Activated CD4-positive, alpha-beta memory T cell treated with anti-CD3 and anti-CD28 coated beads, Interleukin-2, amount 10 ng/mL, durations not matched to agents 7 days and 5 days (primary cell): ENCODE measurements at regions of chr19 and their contacts with region 1.

Region 1: GRCh38 chr19:45792470-45793177 is at the start of gene DMWD:
- DNase-seq: peak; percentile 100
- H3K4me3 Mint-ChIP-seq: peak within 1 kb of the TSS; percentile 96
- H3K27ac Mint-ChIP-seq: peak within 1 kb of the TSS; percentile 78
- H3K4me1 Mint-ChIP-seq: peaks cover 37% of the 10 kb centered on the region
- H3K27me3 Mint-ChIP-seq: peaks cover 53% of the 10 kb centered on the region
- total RNA-seq, gene DMWD: 63.1 to 65.4 TPM

Region 2: DNA sequence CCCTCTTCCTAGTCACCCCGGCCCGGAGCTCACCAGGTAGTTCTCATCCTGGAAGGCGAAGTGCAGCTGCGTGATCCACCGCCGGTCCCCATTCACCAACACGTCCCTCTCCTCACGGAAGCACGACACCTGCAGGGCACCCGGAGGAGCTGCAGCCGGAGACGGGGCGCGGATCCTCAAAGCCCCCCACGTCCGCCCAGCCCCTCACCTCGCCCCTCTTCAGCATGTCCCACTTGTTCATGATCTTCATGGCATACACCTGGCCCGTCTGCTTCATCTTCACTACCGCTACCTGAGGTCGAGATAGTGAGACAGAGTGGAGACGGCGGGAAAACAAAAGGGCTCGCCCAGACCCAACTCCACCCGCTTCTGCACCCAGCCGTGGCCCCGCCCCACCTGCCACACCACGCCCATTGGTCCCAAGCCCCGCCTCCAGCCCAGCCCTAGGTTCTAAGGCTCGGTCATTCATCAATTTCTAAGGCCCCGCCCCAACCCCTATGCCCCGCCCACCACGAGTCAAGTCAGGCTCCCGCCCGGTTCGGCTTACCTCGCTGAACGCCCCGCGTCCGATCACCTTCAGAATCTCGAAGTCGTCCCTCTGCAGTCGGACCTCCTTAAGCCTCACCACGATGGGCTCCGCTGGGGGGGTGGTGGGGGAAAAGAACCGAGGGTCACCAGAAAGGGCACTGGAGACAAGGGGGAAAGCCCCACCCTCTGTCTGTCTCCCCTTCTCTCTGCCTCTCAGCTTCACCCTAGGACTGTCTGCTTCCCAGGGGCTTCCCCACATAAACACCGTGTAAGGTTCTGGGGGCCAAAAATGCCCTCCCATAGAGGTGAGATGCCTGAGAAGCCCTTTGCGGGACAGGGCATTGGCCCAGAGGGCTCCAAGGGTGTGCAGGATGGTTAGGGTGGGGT is 13.1 kb before region 1 on chr19:
- CTCF ChIA-PET with region 1: interaction called, 212 read pairs
- POLR2A ChIA-PET with region 1: interaction called, 3 read pairs
- DNase-seq: peak; percentile 95
- H3K4me3 Mint-ChIP-seq: peak overlapping the region; percentile 67
- H3K27ac Mint-ChIP-seq: peak overlapping the region; percentile 33
- H3K4me1 Mint-ChIP-seq: peaks cover 20% of the 10 kb centered on the region
- H3K27me3 Mint-ChIP-seq: peaks cover 8% of the 10 kb centered on the region

Region 3: DNA sequence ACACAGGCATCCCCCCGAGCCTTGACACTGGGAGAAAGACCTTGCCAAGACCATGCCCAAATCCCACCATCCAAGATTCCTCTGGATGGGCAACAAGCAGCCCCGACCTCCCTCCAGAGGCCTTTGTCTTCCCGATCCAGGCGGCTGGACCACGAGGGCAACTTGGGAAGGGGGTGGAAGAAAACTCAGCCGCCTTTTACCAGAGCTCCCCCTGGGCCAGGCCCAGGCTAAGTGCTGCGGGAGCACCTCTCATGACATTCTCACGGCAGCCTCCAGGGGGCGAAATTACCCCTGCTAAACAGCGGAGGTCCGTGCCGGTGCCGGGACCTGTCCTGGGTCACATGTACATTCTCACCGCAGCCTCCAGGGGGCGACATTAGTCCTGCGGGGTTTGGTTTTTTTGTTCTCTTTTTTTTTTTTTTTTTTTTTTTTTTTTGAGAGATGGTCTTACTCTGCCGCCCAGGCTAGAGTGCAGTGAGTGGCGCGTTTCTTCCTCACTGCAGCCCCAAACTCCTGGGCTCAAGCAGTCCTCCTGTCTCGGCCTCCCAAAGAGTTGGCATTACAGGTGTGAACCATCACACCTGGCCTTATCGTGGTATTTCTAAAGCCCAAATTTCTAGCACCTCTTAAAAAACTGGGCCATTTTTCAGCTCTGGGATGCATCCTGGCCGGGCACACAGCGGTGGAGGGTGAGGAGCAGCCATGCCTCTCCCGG is 24.5 kb after region 1 on chr19:
- CTCF ChIA-PET with region 1: interaction called, 14 read pairs
- POLR2A ChIA-PET with region 1: no interaction called
- DNase-seq: peak; percentile 96
- H3K4me3 Mint-ChIP-seq: no peak overlapping the region
- H3K27ac Mint-ChIP-seq: no peak overlapping the region
- H3K4me1 Mint-ChIP-seq: peaks cover 3% of the 10 kb centered on the region
- H3K27me3 Mint-ChIP-seq: no peaks in the 10 kb centered on the region

Region 4: DNA sequence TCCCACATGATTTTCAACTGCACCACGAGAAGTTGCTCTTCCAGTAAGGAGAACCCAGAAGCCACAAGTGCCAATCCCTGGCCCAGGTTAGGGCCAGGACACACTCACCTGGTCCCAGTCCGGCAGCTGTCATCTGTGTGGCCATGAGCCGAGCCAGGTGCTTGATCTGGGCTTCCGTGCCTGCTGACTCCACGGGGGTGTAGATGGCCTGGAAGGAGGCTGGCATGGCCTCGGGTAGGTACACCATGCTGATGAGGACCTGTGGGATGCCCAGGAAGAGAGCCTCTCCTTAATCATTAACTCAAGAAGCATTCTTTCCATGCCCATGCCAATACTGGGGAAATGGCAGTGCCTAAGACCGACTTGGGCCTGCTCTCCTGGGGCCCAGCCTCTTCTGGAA is 42.3 kb after region 1 on chr19:
- CTCF ChIA-PET with region 1: no interaction called
- POLR2A ChIA-PET with region 1: no interaction called
- DNase-seq: no peak
- H3K4me3 Mint-ChIP-seq: no peak overlapping the region
- H3K27ac Mint-ChIP-seq: no peak overlapping the region
- H3K4me1 Mint-ChIP-seq: peaks cover 3% of the 10 kb centered on the region
- H3K27me3 Mint-ChIP-seq: no peaks in the 10 kb centered on the region

Region 5: GRCh38 chr19:45876411-45877197 is 84.0 kb after region 1 on chr19:
- CTCF ChIA-PET with region 1: no interaction called
- POLR2A ChIA-PET with region 1: no interaction called
- DNase-seq: no peak
- H3K4me3 Mint-ChIP-seq: no peak overlapping the region
- H3K27ac Mint-ChIP-seq: no peak overlapping the region
- H3K4me1 Mint-ChIP-seq: peaks cover 26% of the 10 kb centered on the region
- H3K27me3 Mint-ChIP-seq: peaks cover 25% of the 10 kb centered on the region